ENCODE measurements at regions of chr2 and their contacts with region 1.

Region 1: DNA sequence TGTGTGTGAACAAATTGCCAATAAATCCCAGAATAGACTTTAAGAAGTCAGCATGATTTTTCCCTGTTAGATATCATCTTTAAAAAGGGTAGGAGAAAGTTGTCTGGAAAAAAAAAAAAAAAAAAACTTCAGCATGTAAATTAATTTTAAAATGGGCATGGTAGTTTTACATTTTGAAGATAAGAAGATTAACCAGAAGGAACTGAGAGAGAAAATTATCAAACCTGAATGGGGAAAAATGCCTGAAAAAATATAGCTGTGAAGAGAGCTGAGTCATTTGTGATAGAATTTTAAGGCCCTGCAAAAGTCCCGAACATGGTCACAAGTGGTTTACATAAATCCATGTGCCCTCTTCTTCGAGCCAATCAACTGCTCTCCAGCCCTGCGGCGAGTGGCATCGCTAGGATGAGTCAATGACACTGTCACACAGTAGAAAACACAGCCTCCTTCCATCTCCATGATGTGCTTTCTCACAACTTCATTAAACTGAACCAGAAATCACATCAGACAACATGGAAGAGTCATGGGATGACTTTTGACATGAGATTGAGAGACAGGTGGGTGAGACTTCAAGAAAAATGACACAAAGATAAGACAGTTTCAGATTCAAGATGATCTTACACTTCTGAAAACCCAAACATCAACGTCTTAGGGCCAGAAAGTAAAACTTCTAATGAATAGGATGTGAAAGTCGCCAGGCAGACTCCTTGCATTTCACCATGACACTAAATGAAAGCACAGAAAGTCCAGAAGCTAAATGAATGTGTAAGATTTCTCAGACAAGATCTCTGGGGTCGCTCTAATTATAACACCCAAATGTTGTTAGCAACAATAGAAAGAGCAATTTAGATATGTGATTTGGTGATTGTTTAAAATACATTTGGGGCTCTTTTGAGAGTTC is 273.0 kb upstream of the ID2 start:
- DNase-seq: peak; percentile 82
- H3K4me3 Mint-ChIP-seq: peak overlapping the region; percentile 11
- H3K27ac Mint-ChIP-seq: peak overlapping the region; percentile 85
- H3K4me1 Mint-ChIP-seq: peaks cover 26% of the 10 kb centered on the region
- H3K27me3 Mint-ChIP-seq: peaks cover 5% of the 10 kb centered on the region

Region 2: DNA sequence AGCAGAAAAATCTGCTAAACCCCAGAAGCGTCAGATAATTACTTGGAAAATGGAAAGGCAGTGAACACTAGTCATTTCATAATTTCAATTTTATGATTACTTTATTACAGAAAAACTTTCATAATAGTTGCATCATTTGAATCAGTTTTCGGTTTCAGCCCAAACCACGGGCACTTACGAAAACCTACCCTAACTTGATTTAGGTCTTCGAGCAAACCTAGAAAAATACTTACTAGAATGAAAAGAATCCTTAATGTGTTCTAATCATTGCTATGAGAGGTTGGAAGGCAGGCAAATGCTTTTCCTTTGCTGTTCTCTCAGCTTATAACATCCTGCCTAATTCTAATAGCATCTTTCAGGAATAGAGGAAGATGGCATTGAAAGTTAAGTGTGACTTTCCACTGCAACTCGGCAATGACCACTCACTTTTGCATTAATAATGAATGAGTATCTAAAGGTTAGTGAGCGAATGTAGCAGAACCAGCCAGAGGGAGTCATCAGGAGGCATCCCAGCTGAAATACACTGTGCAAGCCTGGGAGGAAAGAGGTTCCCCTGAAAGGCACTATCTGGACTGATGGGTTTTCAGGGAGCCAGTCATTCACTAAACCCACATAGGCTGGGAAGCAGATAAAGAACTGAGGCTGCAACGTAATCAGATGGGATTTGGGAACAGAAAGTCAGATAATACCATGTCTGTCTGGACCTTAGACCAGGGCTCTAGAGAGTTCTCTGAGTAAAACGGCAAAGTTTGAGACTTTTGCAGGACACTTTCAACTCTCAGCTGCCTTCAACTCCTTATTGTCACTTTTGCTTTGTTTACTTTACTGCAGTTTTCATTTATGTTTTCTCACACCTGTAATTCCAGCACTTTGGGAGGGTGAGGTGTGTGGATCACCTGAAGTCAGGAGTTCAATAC is 970.8 kb before region 1 on chr2:
- intact Hi-C with region 1: loop called (anchors 2 kb)
- DNase-seq: peak; percentile 75
- H3K4me3 Mint-ChIP-seq: peak overlapping the region; percentile 53
- H3K27ac Mint-ChIP-seq: peak overlapping the region; percentile 96
- H3K4me1 Mint-ChIP-seq: peaks cover 65% of the 10 kb centered on the region
- H3K27me3 Mint-ChIP-seq: no peaks in the 10 kb centered on the region

Region 3: GRCh38 chr2:7984693-7985353 is 424.0 kb before region 1 on chr2:
- intact Hi-C with region 1: loop called (anchors 5 kb)
- DNase-seq: no peak
- H3K4me3 Mint-ChIP-seq: peak overlapping the region; percentile 13
- H3K27ac Mint-ChIP-seq: peak overlapping the region; percentile 87
- H3K4me1 Mint-ChIP-seq: peaks cover 17% of the 10 kb centered on the region
- H3K27me3 Mint-ChIP-seq: no peaks in the 10 kb centered on the region

Region 4: DNA sequence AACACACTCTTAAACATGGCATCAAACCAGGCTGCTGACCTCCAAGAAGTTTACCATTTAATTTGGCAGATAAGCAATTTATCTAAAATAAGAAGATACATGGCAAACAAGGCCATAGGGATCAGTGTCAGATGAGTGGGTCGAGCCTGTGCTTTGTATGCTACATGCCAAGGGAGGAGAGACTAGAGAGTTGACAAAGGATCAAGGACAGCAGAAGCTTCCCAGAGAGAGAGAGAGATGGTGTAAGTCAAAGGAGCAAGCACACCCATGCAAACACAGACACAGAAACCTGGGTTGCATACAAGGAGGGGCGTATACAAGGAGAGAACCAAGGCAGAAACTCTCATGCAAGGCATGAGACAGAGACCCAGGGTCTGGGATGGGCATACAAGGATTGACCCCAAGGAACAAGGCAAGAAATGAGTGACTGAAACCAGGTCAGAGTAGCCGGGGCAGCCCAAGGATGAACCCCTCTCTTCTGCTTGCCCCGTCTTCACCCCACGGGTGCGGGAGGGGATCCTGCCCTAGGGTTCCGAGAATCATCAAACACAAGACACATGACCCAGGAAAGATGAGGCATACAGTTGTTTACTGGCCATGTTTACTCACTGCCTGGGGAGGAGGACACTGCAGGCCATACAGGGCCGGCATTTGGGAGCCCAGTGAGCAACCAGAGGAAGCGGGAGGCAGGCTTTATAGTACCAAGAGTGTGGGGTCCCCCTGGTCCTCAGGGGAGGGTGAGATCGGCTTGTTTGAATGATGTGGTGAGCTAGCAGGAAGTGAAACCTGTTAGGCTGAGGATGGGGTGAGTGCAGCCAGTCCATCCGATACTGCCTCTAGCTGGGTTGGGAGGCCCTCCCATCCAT is 256.2 kb before region 1 on chr2:
- intact Hi-C with region 1: loop called (anchors 1 kb)
- DNase-seq: peak; percentile 49
- H3K4me3 Mint-ChIP-seq: no peak overlapping the region
- H3K27ac Mint-ChIP-seq: peak overlapping the region; percentile 12
- H3K4me1 Mint-ChIP-seq: peaks cover 26% of the 10 kb centered on the region
- H3K27me3 Mint-ChIP-seq: no peaks in the 10 kb centered on the region

Region 5: DNA sequence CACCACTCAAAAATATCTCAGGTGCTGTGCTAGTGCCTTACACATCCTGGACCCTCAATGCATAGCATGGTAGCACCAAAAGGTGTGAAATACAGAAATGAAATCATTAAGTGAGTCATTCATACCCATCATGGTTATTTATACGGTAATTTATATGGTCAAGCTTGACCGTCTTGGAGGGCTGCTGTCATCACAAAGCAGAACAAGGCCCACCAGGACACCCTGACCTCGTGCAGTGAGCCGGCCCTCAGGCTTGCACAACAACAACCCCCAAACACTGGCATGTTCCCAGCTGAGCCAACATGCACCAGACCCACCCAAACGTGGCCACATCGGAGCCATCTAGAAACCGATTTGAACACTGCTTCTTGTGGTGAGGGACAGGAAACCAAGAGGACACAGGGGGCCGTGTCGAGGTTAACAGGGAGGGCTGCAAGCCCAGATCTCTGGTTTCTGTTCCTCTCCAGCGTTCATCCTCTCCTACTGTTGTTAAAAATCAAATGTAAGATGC is 105.4 kb before region 1 on chr2:
- intact Hi-C with region 1: loop called (anchors 1 kb)
- DNase-seq: peak; percentile 94
- H3K4me3 Mint-ChIP-seq: peak overlapping the region; percentile 71
- H3K27ac Mint-ChIP-seq: peak overlapping the region; percentile 83
- H3K4me1 Mint-ChIP-seq: peaks cover 72% of the 10 kb centered on the region
- H3K27me3 Mint-ChIP-seq: no peaks in the 10 kb centered on the region

Region 6: DNA sequence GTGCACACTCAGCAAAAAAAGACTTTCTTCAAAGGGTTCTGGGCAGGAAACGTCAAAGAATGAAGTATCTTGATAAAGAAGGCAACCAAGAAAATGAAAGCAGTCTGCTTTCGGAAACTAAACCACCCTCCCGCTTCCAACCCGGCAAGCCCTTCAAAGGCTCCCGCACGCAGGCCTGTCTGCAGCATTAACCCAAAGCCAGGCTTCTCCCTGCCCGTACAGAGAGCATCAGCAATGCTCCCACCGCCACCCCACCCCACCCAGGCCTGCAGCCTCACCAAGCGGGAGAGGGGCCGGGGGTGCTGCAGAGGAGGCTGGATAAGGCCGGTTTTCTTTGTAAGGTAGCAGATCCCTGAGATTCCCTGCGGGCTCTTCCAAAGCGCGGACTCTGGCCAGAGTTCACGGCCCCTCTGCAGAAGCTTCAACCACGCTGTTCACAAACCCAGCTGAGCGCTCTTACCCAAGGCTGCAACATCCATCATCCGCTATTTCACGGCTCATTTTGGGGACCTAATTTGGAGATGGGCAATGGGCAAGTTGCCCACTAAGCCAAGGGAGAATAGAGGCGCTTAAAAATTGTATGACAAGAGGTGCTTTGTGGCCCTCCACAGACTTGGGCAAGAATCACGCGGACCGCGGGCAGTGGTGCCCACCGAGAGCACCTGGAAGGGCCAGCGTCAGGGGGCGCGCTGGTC is 47.5 kb after region 1 on chr2:
- intact Hi-C with region 1: loop called (anchors 5 kb)
- DNase-seq: peak; percentile 90
- H3K4me3 Mint-ChIP-seq: peak overlapping the region; percentile 79
- H3K27ac Mint-ChIP-seq: peak overlapping the region; percentile 91
- H3K4me1 Mint-ChIP-seq: peaks cover 50% of the 10 kb centered on the region
- H3K27me3 Mint-ChIP-seq: peaks cover 10% of the 10 kb centered on the region

Region 7: DNA sequence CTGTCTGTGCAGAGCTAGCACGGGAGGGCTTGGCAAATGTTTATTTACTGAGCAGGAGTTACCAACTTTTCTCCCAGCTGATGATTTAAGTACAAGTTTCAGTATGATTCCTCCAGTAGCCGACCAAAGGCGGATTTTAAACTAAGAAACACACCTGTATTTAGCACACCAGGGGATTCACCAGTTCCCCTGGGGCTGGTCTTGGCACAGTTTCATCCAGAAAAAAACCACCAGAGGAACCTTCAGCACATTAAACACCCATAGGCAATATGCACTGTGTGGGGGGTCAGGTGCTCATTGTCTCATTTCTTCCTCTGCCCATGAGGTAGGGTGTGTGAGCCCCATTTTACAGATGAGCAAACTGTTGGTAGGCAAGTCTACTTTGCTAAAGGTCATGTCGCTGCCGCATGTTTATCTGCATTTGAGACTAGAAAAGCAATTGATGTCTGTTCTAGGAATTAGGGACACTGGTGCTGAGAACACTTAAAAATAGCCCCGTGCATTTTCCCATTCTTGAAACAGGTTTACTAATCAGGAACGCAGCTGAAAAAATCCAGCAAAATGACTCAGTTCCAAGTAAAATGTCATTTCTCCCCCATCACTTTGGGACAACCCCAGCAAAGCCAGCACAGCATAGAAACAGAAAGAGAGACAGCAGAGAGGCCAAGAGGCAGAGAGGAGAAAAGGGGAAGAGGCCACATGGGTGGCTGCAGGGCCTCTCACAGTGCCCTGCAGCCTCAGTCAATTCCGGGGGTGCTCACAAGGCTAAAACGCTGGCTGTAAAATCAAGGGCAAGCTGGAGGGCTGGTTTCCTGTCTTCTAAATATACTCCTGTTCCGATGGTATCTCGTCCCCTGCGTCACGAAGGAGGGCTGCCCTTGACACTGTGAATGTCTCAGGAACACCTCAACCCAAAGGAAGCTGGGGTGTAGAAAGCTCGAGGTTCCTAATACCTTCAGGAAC is 106.3 kb after region 1 on chr2:
- intact Hi-C with region 1: loop called (anchors 1 kb)
- DNase-seq: peak; percentile 87
- H3K4me3 Mint-ChIP-seq: peak overlapping the region; percentile 58
- H3K27ac Mint-ChIP-seq: peak overlapping the region; percentile 96
- H3K4me1 Mint-ChIP-seq: peaks cover 63% of the 10 kb centered on the region
- H3K27me3 Mint-ChIP-seq: no peaks in the 10 kb centered on the region

Region 8: DNA sequence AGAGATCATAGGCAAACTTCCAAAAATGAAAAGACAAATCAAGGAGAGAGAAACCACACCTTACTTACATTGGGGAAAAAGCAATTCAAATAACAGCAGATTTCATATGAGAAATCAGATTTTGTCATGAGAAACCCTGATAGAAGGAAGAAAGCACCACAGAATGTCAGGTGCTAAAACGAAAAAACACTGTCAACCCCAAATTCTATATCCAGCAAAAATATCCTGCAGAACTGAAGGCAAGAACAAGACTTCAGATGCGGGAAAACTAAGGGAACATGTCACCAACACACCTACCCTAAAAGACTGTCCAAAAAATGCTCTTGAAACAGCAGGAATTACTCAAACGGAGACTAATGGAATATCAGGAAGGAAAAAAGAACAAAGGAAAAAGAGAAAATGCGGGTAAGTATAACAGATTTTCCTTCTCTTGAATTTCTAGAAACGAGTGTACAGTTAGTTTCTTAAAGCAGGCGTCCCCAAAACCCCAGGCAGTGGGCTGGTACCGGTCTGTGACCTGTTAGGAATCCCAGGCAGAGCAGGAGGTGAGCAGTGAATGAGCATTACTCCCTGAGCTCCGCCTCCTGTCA is 265.7 kb after region 1 on chr2:
- intact Hi-C with region 1: no loop called
- DNase-seq: no peak
- H3K4me3 Mint-ChIP-seq: no peak overlapping the region
- H3K27ac Mint-ChIP-seq: no peak overlapping the region
- H3K4me1 Mint-ChIP-seq: peaks cover 20% of the 10 kb centered on the region
- H3K27me3 Mint-ChIP-seq: peaks cover 61% of the 10 kb centered on the region